ENCODE measurements at regions of chr1 and their contacts with region 1.

Region 1: GRCh38 chr1:45569962-45570581 is 13.8 kb upstream of the NASP start:
- DNase-seq: peak; percentile 67 to 73 (median 72)
- H3K4me3 ChIP-seq: no peak overlapping the region
- H3K4me3 Mint-ChIP-seq: no peak overlapping the region
- H3K27ac ChIP-seq: no peak overlapping the region
- H3K27ac Mint-ChIP-seq: peak overlapping the region in 6 of 7 donors; percentile 28 to 88 (median 54)
- H3K4me1 ChIP-seq: no peaks in the 10 kb centered on the region
- H3K4me1 Mint-ChIP-seq: peaks cover 0 to 3% (median 0%) of the 10 kb centered on the region in 4 donors
- H3K27me3 ChIP-seq: no peaks in the 10 kb centered on the region
- H3K27me3 Mint-ChIP-seq: no peaks in the 10 kb centered on the region

Region 2: GRCh38 chr1:45155423-45155822 is 414.6 kb before region 1 on chr1:
- CTCF ChIA-PET with region 1: no interaction called
- POLR2A ChIA-PET with region 1: no interaction called
- intact Hi-C with region 1: no loop called
- DNase-seq: no peak
- H3K4me3 ChIP-seq: no peak overlapping the region
- H3K4me3 Mint-ChIP-seq: no peak overlapping the region
- H3K27ac ChIP-seq: no peak overlapping the region
- H3K27ac Mint-ChIP-seq: no peak overlapping the region
- H3K4me1 ChIP-seq: no peaks in the 10 kb centered on the region
- H3K4me1 Mint-ChIP-seq: peaks cover 1 to 4% (median 3%) of the 10 kb centered on the region in 4 donors
- H3K27me3 ChIP-seq: no peaks in the 10 kb centered on the region
- H3K27me3 Mint-ChIP-seq: peaks cover 2 to 3% of the 10 kb centered on the region in 2 donors

Region 3: GRCh38 chr1:45359882-45360513 is 210.1 kb before region 1 on chr1:
- CTCF ChIA-PET with region 1: interaction called, 23 read pairs
- POLR2A ChIA-PET with region 1: interaction called, 4 read pairs
- intact Hi-C with region 1: loop called (anchors 1 kb)
- DNase-seq: peak in 4 of 5 donors; percentile 34 to 50 (median 48)
- H3K4me3 ChIP-seq: no peak overlapping the region
- H3K4me3 Mint-ChIP-seq: no peak overlapping the region
- H3K27ac ChIP-seq: no peak overlapping the region
- H3K27ac Mint-ChIP-seq: peak overlapping the region in 4 of 7 donors; percentile 5 to 66 (median 46)
- H3K4me1 ChIP-seq: peaks cover 4% of the 10 kb centered on the region
- H3K4me1 Mint-ChIP-seq: peaks cover 4 to 7% (median 4%) of the 10 kb centered on the region in 4 donors
- H3K27me3 ChIP-seq: no peaks in the 10 kb centered on the region
- H3K27me3 Mint-ChIP-seq: no peaks in the 10 kb centered on the region

Region 4: GRCh38 chr1:45499415-45499769 is 70.7 kb before region 1 on chr1:
- CTCF ChIA-PET with region 1: interaction called, 25 read pairs
- POLR2A ChIA-PET with region 1: no interaction called
- intact Hi-C with region 1: no loop called
- DNase-seq: peak in 1 of 5 donors; percentile 4
- H3K4me3 ChIP-seq: peak overlapping the region; percentile 62 to 88
- H3K4me3 Mint-ChIP-seq: peak overlapping the region; percentile 91 to 96 (median 95)
- H3K27ac ChIP-seq: peak overlapping the region; percentile 62
- H3K27ac Mint-ChIP-seq: peak overlapping the region; percentile 81 to 98 (median 96)
- H3K4me1 ChIP-seq: peaks cover 18% of the 10 kb centered on the region
- H3K4me1 Mint-ChIP-seq: peaks cover 31 to 34% (median 31%) of the 10 kb centered on the region in 4 donors
- H3K27me3 ChIP-seq: no peaks in the 10 kb centered on the region
- H3K27me3 Mint-ChIP-seq: no peaks in the 10 kb centered on the region

Region 5: DNA sequence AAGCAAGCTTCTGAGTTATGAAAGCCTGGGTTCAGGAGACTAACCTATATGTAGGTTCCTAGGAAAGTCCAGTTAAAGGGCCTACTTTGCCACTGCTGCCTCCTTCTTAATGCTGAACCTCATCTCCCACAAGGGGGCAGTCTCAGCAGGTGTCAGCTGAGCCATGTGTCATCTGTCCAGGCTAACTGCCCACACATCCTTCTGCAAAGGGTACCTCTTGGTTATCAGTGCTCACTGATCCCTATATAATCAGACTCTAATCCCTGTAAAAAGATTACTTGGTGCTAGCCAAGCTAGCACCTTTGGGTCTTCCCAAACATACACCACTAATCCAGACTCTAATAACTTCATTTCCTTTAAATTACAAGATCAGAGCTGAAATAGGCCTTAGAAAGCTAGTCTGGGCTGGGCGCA is 57.4 kb before region 1 on chr1:
- CTCF ChIA-PET with region 1: interaction called, 184 read pairs
- POLR2A ChIA-PET with region 1: interaction called, 16 read pairs
- intact Hi-C with region 1: loop called (anchors 1 kb)
- DNase-seq: peak; percentile 42 to 60 (median 47)
- H3K4me3 ChIP-seq: no peak overlapping the region
- H3K4me3 Mint-ChIP-seq: no peak overlapping the region
- H3K27ac ChIP-seq: no peak overlapping the region
- H3K27ac Mint-ChIP-seq: peak overlapping the region in 3 of 7 donors; percentile 18 to 68 (median 24)
- H3K4me1 ChIP-seq: no peaks in the 10 kb centered on the region
- H3K4me1 Mint-ChIP-seq: peaks cover 3 to 14% (median 7%) of the 10 kb centered on the region in 4 donors
- H3K27me3 ChIP-seq: no peaks in the 10 kb centered on the region
- H3K27me3 Mint-ChIP-seq: no peaks in the 10 kb centered on the region

Region 6: GRCh38 chr1:45550401-45551351 is 19.4 kb before region 1 on chr1 and contains the start of gene AKR1A1:
- CTCF ChIA-PET with region 1: interaction called, 4 read pairs
- POLR2A ChIA-PET with region 1: interaction called, 7 read pairs
- intact Hi-C with region 1: loop called (anchors 2 kb)
- DNase-seq: peak; percentile 86 to 89 (median 88)
- H3K4me3 ChIP-seq: peak within 1 kb of the TSS; percentile 82 to 87
- H3K4me3 Mint-ChIP-seq: peak within 1 kb of the TSS; percentile 95 to 98 (median 96)
- H3K27ac ChIP-seq: peak within 1 kb of the TSS; percentile 79
- H3K27ac Mint-ChIP-seq: peak within 1 kb of the TSS; percentile 92 to 98 (median 97)
- H3K4me1 ChIP-seq: peaks cover 23% of the 10 kb centered on the region
- H3K4me1 Mint-ChIP-seq: peaks cover 14 to 31% (median 22%) of the 10 kb centered on the region in 4 donors
- H3K27me3 ChIP-seq: no peaks in the 10 kb centered on the region
- H3K27me3 Mint-ChIP-seq: no peaks in the 10 kb centered on the region
- total RNA-seq, gene AKR1A1: 84.3 to 89.8 TPM

Region 7: GRCh38 chr1:45557422-45557944 is 12.6 kb before region 1 on chr1:
- CTCF ChIA-PET with region 1: interaction called, 31 read pairs
- POLR2A ChIA-PET with region 1: no interaction called
- intact Hi-C with region 1: no loop called
- DNase-seq: no peak
- H3K4me3 ChIP-seq: no peak overlapping the region
- H3K4me3 Mint-ChIP-seq: no peak overlapping the region
- H3K27ac ChIP-seq: no peak overlapping the region
- H3K27ac Mint-ChIP-seq: peak overlapping the region in 2 of 7 donors; percentile 1 to 35
- H3K4me1 ChIP-seq: peaks cover 3% of the 10 kb centered on the region
- H3K4me1 Mint-ChIP-seq: peaks cover 7 to 12% (median 9%) of the 10 kb centered on the region in 4 donors
- H3K27me3 ChIP-seq: no peaks in the 10 kb centered on the region
- H3K27me3 Mint-ChIP-seq: no peaks in the 10 kb centered on the region

Region 8: GRCh38 chr1:45669859-45670655 is 100.0 kb after region 1 on chr1:
- CTCF ChIA-PET with region 1: no interaction called
- POLR2A ChIA-PET with region 1: no interaction called
- intact Hi-C with region 1: no loop called
- DNase-seq: no peak
- H3K4me3 ChIP-seq: no peak overlapping the region
- H3K4me3 Mint-ChIP-seq: peak overlapping the region in 1 of 8 donors; percentile 8
- H3K27ac ChIP-seq: no peak overlapping the region
- H3K27ac Mint-ChIP-seq: peak overlapping the region in 6 of 7 donors; percentile 15 to 59 (median 28)
- H3K4me1 ChIP-seq: peaks cover 60% of the 10 kb centered on the region
- H3K4me1 Mint-ChIP-seq: peaks cover 44 to 79% (median 62%) of the 10 kb centered on the region in 4 donors
- H3K27me3 ChIP-seq: no peaks in the 10 kb centered on the region
- H3K27me3 Mint-ChIP-seq: no peaks in the 10 kb centered on the region